ENCODE measurements at regions of chr6 and their contacts with region 1.

Region 1: DNA sequence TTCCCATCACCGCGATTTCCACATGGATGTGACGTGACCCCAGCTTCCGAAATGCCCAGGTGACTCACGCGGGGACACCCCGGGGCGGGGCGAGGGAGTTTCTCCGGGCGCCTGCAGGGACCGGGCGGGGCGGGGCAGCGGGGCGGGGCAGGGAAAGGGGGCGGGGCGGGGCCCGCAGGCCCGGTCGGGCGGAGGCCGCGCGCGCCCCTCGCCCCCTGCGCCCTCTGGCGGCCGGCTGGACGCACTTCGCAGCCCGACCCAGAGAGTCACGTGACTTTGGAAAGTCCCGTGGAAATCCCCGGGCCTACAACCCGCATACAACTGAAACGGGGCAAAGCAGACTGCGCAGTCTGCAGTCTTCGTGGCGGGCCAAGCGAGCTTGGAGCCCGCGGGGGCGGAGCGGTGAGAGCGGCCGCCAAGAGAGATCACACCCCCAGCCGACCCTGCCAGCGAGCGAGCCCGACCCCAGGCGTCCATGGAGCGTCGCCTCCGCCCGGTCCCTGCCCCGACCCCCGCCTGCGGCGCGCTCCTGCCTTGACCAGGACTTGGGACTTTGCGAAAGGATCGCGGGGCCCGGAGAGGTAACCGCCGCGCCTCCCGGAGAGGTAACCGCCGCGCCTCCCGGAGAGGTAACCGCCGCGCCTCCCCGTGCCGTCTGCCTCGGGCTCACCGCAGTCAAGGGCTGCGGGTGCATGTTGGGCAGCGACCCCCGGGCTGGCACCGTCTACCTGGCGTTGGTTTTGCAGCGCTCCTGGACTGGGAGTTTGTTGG is at the start of gene TNFAIP3:
- DNase-seq: peak; percentile 94
- H3K4me3 ChIP-seq: peak within 1 kb of the TSS; percentile 91 to 96
- H3K27ac ChIP-seq: peak within 1 kb of the TSS; percentile 88 to 90
- H3K4me1 ChIP-seq: peaks cover 24% of the 10 kb centered on the region
- H3K27me3 ChIP-seq: no peaks in the 10 kb centered on the region
- CTCF ChIP-seq: peak; percentile 82 to 97 (median 85)
- POLR2A ChIP-seq: peak; percentile 16
- total RNA-seq, gene TNFAIP3: 12.6 to 15.2 TPM

Region 2: DNA sequence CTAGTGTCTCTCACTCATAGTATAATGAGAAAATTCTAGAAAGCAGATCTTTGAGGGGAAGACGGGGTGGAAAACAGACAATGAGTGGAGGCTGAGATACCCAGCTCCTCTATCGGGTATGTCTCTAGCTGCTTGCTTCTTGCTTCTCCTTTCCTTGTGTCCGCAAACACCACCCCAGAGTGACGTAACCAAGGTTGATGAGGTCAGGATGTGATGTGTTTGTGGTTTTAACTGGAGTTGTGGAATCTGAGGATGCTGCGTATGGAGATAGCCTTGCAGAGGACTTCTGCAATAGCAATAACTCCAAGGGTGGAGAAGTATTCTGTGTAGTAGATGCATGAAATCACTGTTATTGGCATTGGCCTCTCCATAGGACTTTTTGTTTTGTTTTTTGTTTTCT is 515.2 kb before region 1 on chr6:
- intact Hi-C with region 1: no loop called
- DNase-seq: no peak
- H3K4me3 ChIP-seq: no peak overlapping the region
- H3K27ac ChIP-seq: no peak overlapping the region
- H3K4me1 ChIP-seq: peaks cover 6% of the 10 kb centered on the region
- H3K27me3 ChIP-seq: no peaks in the 10 kb centered on the region
- CTCF ChIP-seq: no peak
- POLR2A ChIP-seq: no peak

Region 3: DNA sequence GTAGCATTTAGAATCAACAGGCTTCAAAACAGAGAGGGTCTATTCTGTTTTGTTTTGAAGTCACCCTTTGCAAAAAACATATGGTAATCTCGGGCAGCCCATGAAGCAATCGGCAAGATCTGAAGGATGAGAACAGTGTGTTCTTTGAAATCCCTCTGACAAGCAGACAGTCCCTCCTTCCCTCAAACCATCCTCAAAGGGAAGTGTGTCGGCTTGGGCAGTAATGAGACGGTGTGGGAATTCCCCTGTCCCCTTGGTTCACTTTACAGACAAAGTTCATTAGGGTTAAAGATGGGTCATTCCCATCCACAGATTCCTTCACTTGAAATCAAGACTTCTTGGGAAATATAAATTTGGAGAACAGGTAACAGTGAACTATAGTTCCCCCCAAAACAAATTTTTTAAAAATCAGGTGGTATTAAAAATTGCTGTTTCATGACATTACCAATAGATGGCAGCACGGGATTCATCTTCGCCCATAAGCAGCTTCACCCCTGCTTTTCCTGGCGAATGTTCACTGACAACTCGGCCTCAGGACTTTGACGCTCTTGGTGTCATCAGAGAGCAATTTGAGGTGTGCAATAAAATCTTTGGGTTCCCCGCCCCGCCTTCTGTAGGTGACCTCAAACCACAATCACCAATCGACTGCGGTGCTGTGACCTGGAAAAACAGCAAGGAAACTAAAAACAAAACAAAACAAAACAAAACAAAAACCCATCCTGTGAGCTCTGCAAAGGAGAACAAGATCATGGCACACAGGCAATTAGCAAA is 159.3 kb before region 1 on chr6:
- intact Hi-C with region 1: loop called (anchors 5 kb)
- DNase-seq: peak; percentile 77
- H3K4me3 ChIP-seq: no peak overlapping the region
- H3K27ac ChIP-seq: no peak overlapping the region
- H3K4me1 ChIP-seq: peaks cover 3% of the 10 kb centered on the region
- H3K27me3 ChIP-seq: no peaks in the 10 kb centered on the region
- CTCF ChIP-seq: peak; percentile 64 to 87 (median 69)
- POLR2A ChIP-seq: no peak

Region 4: GRCh38 chr6:137799950-137800568 is 67.0 kb before region 1 on chr6:
- intact Hi-C with region 1: loop called (anchors 10 kb)
- DNase-seq: peak; percentile 80
- H3K4me3 ChIP-seq: no peak overlapping the region
- H3K27ac ChIP-seq: no peak overlapping the region
- H3K4me1 ChIP-seq: peaks cover 13% of the 10 kb centered on the region
- H3K27me3 ChIP-seq: no peaks in the 10 kb centered on the region
- CTCF ChIP-seq: peak; percentile 48 to 67 (median 63)
- POLR2A ChIP-seq: no peak